AG04450 (cell line): ENCODE measurements at regions of chr3 and their contacts with region 1.

Region 1: GRCh38 chr3:46895204-46895660 is 17.7 kb downstream of the PTH1R start:
- DNase-seq: no peak
- H3K4me3 ChIP-seq: no peak overlapping the region
- H3K27ac ChIP-seq: no peak overlapping the region
- H3K27me3 ChIP-seq: peaks cover 48% of the 10 kb centered on the region
- CTCF ChIP-seq: peak; percentile 95

Region 2: DNA sequence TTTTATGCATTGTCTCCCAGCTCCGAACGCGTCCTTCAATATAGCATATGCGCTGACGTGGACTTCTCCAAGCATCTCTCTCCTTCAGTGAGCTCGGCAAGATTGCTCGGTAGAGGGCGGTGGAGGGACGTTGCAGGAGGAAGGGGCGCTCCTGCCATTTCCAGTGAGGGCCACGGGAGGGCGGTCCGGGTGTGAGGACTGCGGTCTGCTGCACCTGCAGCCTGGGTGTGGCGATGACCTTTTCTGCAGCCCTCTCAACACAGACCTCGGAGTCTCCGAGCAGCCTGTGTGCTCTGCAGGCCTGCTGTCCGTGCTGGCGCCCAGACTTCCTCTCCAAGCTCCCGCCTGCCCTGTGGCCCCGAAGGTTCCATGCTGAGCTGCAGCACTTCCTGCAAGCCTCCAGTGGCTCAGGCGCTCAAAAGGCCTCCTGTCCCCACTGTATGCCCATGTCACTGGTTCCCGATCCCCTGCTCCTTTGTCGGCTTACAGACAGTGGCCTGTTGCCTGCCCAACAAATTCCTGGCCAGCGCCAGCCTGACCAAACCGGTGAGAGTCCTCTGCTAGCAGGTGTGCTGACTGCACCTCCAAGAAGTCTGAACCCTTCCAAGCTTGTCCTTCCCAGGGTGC is 406.4 kb before region 1 on chr3:
- CTCF ChIA-PET with region 1: interaction called, 12 read pairs
- POLR2A ChIA-PET with region 1: no interaction called
- DNase-seq: peak; percentile 67
- H3K4me3 ChIP-seq: no peak overlapping the region
- H3K27ac ChIP-seq: no peak overlapping the region
- H3K27me3 ChIP-seq: peaks cover 5% of the 10 kb centered on the region
- CTCF ChIP-seq: peak; percentile 100

Region 3: GRCh38 chr3:46646700-46647099 is 248.5 kb before region 1 on chr3:
- CTCF ChIA-PET with region 1: no interaction called
- POLR2A ChIA-PET with region 1: no interaction called
- DNase-seq: peak; percentile 43
- H3K4me3 ChIP-seq: no peak overlapping the region
- H3K27ac ChIP-seq: no peak overlapping the region
- H3K27me3 ChIP-seq: peaks cover 3% of the 10 kb centered on the region
- CTCF ChIP-seq: no peak

Region 4: DNA sequence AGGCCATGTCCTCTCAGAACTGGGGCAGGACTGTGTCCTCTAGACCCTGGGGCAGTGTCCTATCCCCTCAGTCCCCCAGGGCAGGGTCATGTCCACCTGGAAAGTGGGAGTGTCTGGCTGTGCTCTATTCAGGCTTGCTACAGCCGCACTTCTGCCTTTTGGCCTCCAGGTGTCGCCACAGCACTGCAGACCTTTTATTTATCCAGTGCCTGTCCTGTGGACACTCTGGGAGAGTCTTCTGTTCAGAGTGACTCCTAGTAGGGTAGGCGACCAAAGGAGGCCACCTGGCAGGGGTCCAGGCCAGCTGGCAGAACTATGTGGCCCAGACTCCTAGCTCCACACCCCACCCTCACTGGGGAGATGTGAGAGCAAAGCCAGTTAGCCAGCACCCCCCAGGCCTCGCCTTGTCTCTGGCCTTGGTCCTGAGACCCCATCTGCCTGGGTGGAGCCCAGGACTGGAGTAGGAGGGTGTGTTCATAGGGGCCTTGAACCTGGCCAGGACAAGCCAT is 190.2 kb before region 1 on chr3:
- CTCF ChIA-PET with region 1: interaction called, 24 read pairs
- POLR2A ChIA-PET with region 1: no interaction called
- DNase-seq: peak; percentile 26
- H3K4me3 ChIP-seq: no peak overlapping the region
- H3K27ac ChIP-seq: no peak overlapping the region
- H3K27me3 ChIP-seq: peaks cover 47% of the 10 kb centered on the region
- CTCF ChIP-seq: peak; percentile 96

Region 5: GRCh38 chr3:46756642-46757041 is 138.6 kb before region 1 on chr3:
- CTCF ChIA-PET with region 1: no interaction called
- POLR2A ChIA-PET with region 1: no interaction called
- DNase-seq: no peak
- H3K4me3 ChIP-seq: no peak overlapping the region
- H3K27ac ChIP-seq: no peak overlapping the region
- H3K27me3 ChIP-seq: peaks cover 6% of the 10 kb centered on the region
- CTCF ChIP-seq: no peak

Region 6: GRCh38 chr3:46866720-46867549 is 28.3 kb before region 1 on chr3:
- CTCF ChIA-PET with region 1: interaction called, 57 read pairs
- POLR2A ChIA-PET with region 1: no interaction called
- DNase-seq: no peak
- H3K4me3 ChIP-seq: no peak overlapping the region
- H3K27ac ChIP-seq: no peak overlapping the region
- H3K27me3 ChIP-seq: peaks cover 46% of the 10 kb centered on the region
- CTCF ChIP-seq: peak; percentile 90

Region 7: DNA sequence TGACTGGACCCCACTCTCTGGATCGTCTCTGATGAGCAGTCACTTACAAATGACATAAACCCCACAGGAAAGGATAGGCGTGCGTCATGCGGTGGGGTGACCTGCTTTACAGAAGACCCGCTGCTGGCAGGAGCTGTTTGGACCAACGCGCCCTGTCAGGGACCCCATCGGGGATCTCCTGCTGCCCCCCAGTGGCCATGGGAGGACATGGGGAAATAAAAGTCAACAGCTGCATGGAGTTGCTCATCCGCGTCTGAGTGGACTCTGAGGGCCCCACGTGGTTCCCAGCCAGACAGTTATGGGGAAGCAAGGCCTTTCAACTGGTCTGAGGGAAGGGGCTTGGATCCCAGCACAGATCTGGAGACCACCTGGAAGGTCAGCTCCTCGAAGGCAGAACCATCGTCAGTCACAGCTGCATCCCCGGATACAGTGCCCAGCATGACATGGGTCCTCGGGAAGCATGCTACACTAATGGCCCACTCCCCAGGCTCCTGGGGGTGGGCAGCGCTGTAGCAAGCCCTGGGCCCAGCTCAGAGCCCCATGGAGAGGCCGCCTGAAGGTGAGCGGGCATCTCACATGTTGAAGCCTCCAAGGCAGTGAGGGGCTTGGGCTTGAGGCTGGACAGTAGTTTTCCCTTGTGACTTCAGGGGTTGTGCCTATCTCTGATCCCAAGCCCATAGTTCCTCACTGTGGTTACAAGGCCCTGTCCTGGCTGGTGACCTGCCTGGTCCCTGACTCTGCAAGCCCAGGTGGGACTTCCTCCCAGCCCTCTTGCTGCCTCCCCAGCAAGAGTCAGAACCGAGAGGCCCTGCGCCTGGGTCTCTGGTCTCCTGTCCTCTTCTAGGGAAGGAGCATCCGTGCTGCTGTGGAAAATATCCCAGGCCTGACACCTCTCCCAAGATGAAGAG is 14.6 kb after region 1 on chr3:
- CTCF ChIA-PET with region 1: interaction called, 11 read pairs
- POLR2A ChIA-PET with region 1: no interaction called
- DNase-seq: peak; percentile 53
- H3K4me3 ChIP-seq: no peak overlapping the region
- H3K27ac ChIP-seq: no peak overlapping the region
- H3K27me3 ChIP-seq: no peaks in the 10 kb centered on the region
- CTCF ChIP-seq: peak; percentile 96

Region 8: DNA sequence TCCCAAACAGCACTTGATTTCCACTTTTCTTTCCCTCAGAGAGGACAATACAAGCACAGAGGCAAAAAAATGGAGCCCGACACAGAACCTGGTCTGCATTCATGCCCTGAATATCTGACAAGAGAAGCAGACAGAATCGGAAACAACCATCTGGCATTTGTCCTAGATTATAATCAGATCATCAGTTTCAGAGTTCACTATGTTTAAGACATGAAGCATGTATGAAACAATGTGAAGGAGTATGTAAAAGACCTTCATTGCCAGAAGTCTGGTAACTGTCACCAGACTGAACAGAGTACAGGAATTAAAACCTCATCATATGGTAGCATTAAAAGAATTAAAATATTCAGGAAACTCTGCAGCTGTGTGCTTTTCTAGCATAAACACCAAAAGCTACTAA is 203.7 kb after region 1 on chr3:
- CTCF ChIA-PET with region 1: no interaction called
- POLR2A ChIA-PET with region 1: no interaction called
- DNase-seq: no peak
- H3K4me3 ChIP-seq: no peak overlapping the region
- H3K27ac ChIP-seq: no peak overlapping the region
- H3K27me3 ChIP-seq: no peaks in the 10 kb centered on the region
- CTCF ChIP-seq: no peak